ENCODE measurements at regions of chr12 and their contacts with region 1.

Region 1: GRCh38 chr12:117025481-117026151 is 73.6 kb downstream of the TESC start:
- DNase-seq: peak in 1 of 2 donors; percentile 79
- H3K4me3 ChIP-seq: no peak overlapping the region
- H3K27ac ChIP-seq: no peak overlapping the region
- H3K4me1 ChIP-seq: peaks cover 0 to 5% of the 10 kb centered on the region in 2 donors
- H3K27me3 ChIP-seq: no peaks in the 10 kb centered on the region
- CTCF ChIP-seq: peak; percentile 78 to 90 (median 85)

Region 2: DNA sequence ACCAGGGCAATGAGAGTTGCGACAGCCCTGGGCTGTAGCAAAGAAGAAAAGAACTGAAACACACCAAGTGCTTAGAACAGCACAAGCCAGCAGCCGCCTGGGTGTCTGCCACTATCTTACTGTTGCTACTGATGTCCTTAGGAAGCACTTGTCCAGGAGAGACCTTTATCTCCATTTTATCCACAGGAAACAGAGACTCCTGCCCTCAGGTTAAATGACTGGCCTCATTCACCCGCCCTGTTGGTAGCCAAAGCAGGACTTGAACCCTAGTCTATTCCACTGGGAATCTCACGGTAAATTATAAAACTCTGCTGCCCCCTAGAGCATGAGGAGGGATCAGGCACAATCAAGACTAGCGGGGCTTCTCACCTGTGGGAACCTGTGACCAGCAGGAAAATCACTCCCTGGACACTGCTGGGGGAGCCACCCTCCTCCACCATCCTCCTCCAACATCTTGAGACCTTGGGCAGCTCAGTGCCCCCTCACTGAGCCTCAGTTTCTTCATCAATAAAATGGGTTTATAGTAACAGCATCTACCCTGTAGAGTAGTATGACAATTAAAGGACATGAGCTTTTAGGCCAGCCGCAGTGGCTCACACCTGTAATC is 94.1 kb after region 1 on chr12:
- intact Hi-C with region 1: loop called (anchors 10 kb)
- DNase-seq: no peak
- H3K4me3 ChIP-seq: no peak overlapping the region
- H3K27ac ChIP-seq: no peak overlapping the region
- H3K4me1 ChIP-seq: peaks cover 0 to 2% of the 10 kb centered on the region in 2 donors
- H3K27me3 ChIP-seq: no peaks in the 10 kb centered on the region
- CTCF ChIP-seq: peak; percentile 36 to 54 (median 40)

Region 3: DNA sequence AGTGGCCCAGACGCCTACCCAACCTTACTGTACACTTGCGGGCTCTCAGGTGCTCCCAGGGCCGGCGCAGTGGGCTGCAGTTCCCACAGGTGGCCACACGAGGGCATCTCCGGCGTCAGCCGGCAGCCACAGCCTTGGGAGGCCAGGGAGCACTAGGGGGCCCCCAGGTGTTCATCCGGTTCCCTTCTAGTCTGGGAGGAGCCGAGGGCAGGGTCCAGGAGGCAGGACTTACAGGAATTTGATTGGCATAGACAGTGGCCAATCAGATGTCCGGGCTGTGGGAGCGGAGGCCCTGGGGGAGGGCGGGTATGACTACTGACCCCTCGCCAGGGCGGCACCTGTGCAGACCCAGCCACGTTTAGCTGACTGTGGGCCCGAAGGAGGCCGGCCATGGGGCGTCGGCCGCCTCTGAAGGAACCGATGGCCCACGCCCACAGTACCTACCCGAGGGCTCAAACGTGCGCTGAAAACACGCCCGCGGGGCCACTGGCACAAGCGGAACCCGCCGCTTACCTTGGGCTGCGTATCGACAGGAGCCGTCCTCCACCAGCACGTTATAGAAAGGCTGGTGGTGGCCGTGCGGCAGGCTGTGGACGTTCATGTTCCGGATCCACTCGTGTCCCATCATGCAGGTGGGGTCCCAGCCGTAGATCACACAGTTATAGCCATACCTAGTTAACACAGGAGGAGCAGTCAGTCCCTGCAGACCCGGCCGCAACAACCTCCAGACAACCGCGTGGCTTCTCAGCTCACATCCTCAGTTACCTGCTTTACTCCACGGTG is 129.9 kb after region 1 on chr12:
- intact Hi-C with region 1: loop called (anchors 2 kb)
- DNase-seq: peak in 1 of 2 donors; percentile 65
- H3K4me3 ChIP-seq: no peak overlapping the region
- H3K27ac ChIP-seq: no peak overlapping the region
- H3K4me1 ChIP-seq: no peaks in the 10 kb centered on the region
- H3K27me3 ChIP-seq: no peaks in the 10 kb centered on the region
- CTCF ChIP-seq: peak; percentile 17 to 70 (median 69)